CD4-positive, alpha-beta T cell (primary cell): ENCODE measurements at regions of chr1 and their contacts with region 1.

Region 1: GRCh38 chr1:6343506-6344405 is 49.8 kb downstream of the ACOT7 start:
- DNase-seq: peak in 13 of 14 experiments; percentile 26 to 72 (median 51)
- ATAC-seq: peak; percentile 54
- H3K4me3 ChIP-seq: no peak overlapping the region
- H3K4me3 Mint-ChIP-seq: no peak overlapping the region
- H3K27ac ChIP-seq: no peak overlapping the region
- H3K27ac Mint-ChIP-seq: no peak overlapping the region
- H3K4me1 ChIP-seq: peaks cover 12% of the 10 kb centered on the region
- H3K4me1 Mint-ChIP-seq: peaks cover 17% of the 10 kb centered on the region
- H3K27me3 ChIP-seq: no peaks in the 10 kb centered on the region
- H3K27me3 Mint-ChIP-seq: no peaks in the 10 kb centered on the region
- CTCF ChIP-seq: peak; percentile 33

Region 2: DNA sequence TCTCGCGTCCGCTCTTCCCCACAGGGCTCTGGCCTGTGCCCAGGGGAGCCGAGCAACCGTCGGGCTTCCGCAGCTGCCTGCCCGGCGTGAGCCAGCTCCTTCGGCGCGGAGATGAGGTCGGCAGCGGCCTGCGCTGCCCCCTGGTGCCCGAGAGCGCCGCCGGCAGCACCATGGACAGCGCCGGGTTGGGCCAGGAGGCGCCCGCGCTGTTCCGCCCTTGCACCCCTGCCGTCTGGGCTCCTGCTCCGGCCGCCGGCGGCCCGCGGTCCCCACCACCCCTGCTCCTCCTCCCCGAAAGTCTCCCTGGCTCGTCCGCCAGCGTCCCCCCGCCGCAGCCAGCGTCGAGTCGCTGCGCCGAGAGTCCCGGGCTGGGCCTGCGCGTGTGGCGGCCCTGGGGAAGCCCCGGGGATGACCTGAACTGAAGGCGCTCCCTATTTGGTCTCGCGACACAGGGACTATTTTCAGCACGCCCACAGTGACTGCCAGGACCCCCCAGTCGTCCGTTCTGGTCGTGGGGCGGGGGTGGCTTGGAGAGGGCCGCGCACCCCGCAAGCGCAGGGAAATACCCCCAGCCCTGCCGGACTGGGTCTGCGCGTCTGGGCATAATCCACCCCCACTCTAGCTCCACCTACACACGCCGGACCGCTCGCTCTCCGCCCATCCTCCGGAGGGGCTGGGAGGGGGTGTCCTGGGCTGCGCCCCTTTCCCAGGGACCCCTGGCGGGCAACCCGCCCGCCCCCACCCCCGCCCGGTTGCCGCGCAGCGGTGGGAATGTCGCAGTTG is 98.5 kb before region 1 on chr1:
- CTCF ChIA-PET with region 1: interaction called, 8 read pairs
- POLR2A ChIA-PET with region 1: interaction called, 5 read pairs
- intact Hi-C with region 1: loop called (anchors 1 kb)
- DNase-seq: peak; percentile 61 to 92 (median 76)
- ATAC-seq: peak; percentile 80
- H3K4me3 ChIP-seq: no peak overlapping the region
- H3K4me3 Mint-ChIP-seq: no peak overlapping the region
- H3K27ac ChIP-seq: no peak overlapping the region
- H3K27ac Mint-ChIP-seq: no peak overlapping the region
- H3K4me1 ChIP-seq: peaks cover 35% of the 10 kb centered on the region
- H3K4me1 Mint-ChIP-seq: peaks cover 22% of the 10 kb centered on the region
- H3K27me3 ChIP-seq: peaks cover 74 to 85% of the 10 kb centered on the region in 2 experiments
- H3K27me3 Mint-ChIP-seq: peaks cover 70% of the 10 kb centered on the region
- CTCF ChIP-seq: peak; percentile 58

Region 3: GRCh38 chr1:6329396-6329795 is 14.4 kb before region 1 on chr1:
- CTCF ChIA-PET with region 1: no interaction called
- POLR2A ChIA-PET with region 1: no interaction called
- intact Hi-C with region 1: no loop called
- DNase-seq: no peak
- ATAC-seq: no peak
- H3K4me3 ChIP-seq: no peak overlapping the region
- H3K4me3 Mint-ChIP-seq: no peak overlapping the region
- H3K27ac ChIP-seq: no peak overlapping the region
- H3K27ac Mint-ChIP-seq: no peak overlapping the region
- H3K4me1 ChIP-seq: no peaks in the 10 kb centered on the region
- H3K4me1 Mint-ChIP-seq: no peaks in the 10 kb centered on the region
- H3K27me3 ChIP-seq: no peaks in the 10 kb centered on the region
- H3K27me3 Mint-ChIP-seq: no peaks in the 10 kb centered on the region
- CTCF ChIP-seq: no peak

Region 4: DNA sequence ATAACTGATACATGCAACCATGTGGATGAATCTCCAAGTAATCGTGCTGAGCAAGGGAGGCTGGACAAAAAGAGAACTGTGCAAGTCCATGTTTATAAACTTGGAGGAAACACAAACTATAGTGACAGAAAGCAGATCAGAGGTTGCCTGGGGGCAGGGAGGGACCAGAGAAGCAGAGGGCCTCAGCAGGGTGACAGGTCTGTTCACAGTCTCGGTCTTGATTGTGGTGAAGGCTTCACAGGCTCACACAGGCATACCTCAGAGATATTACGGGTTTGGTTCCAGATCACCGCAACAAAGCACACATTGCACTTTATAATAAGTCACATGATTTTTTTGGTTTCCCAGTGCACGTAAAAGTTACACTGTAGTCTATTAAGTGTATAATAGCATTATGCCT is 21.3 kb after region 1 on chr1:
- CTCF ChIA-PET with region 1: interaction called, 8 read pairs
- POLR2A ChIA-PET with region 1: interaction called, 30 read pairs
- intact Hi-C with region 1: loop called in 1 of 2 experiments (anchors 2 kb)
- DNase-seq: peak in 12 of 14 experiments; percentile 27 to 85 (median 57)
- ATAC-seq: peak; percentile 97
- H3K4me3 ChIP-seq: no peak overlapping the region
- H3K4me3 Mint-ChIP-seq: peak overlapping the region; percentile 78
- H3K27ac ChIP-seq: no peak overlapping the region
- H3K27ac Mint-ChIP-seq: peak overlapping the region; percentile 88
- H3K4me1 ChIP-seq: peaks cover 48% of the 10 kb centered on the region
- H3K4me1 Mint-ChIP-seq: peaks cover 39% of the 10 kb centered on the region
- H3K27me3 ChIP-seq: no peaks in the 10 kb centered on the region
- H3K27me3 Mint-ChIP-seq: no peaks in the 10 kb centered on the region
- CTCF ChIP-seq: no peak

Region 5: GRCh38 chr1:6401673-6402072 is 57.9 kb after region 1 on chr1:
- CTCF ChIA-PET with region 1: interaction called, 39 read pairs
- POLR2A ChIA-PET with region 1: interaction called, 5 read pairs
- intact Hi-C with region 1: loop called (anchors 1 kb)
- DNase-seq: peak in 3 of 14 experiments; percentile 28 to 52 (median 30)
- ATAC-seq: no peak
- H3K4me3 ChIP-seq: no peak overlapping the region
- H3K4me3 Mint-ChIP-seq: no peak overlapping the region
- H3K27ac ChIP-seq: no peak overlapping the region
- H3K27ac Mint-ChIP-seq: no peak overlapping the region
- H3K4me1 ChIP-seq: no peaks in the 10 kb centered on the region
- H3K4me1 Mint-ChIP-seq: peaks cover 4% of the 10 kb centered on the region
- H3K27me3 ChIP-seq: peaks cover 0 to 3% of the 10 kb centered on the region in 2 experiments
- H3K27me3 Mint-ChIP-seq: peaks cover 6% of the 10 kb centered on the region
- CTCF ChIP-seq: no peak

Region 6: GRCh38 chr1:6475381-6476133 is 131.8 kb after region 1 on chr1:
- CTCF ChIA-PET with region 1: no interaction called
- POLR2A ChIA-PET with region 1: no interaction called
- intact Hi-C with region 1: loop called in 1 of 2 experiments (anchors 5 kb)
- DNase-seq: peak; percentile 72 to 90 (median 82)
- ATAC-seq: peak; percentile 97
- H3K4me3 ChIP-seq: no peak overlapping the region
- H3K4me3 Mint-ChIP-seq: peak overlapping the region; percentile 56
- H3K27ac ChIP-seq: no peak overlapping the region
- H3K27ac Mint-ChIP-seq: no peak overlapping the region
- H3K4me1 ChIP-seq: peaks cover 13% of the 10 kb centered on the region
- H3K4me1 Mint-ChIP-seq: peaks cover 8% of the 10 kb centered on the region
- H3K27me3 ChIP-seq: no peaks in the 10 kb centered on the region
- H3K27me3 Mint-ChIP-seq: no peaks in the 10 kb centered on the region
- CTCF ChIP-seq: peak; percentile 88